ENCODE measurements at regions of chr5 and their contacts with region 1.

Region 1: GRCh38 chr5:153147891-153148623 is 342.4 kb upstream of the GRIA1 start:
- DNase-seq: no peak
- ATAC-seq: peak; percentile 46

Region 2: GRCh38 chr5:152270096-152270495 is 878.0 kb before region 1 on chr5:
- intact Hi-C with region 1: no loop called
- DNase-seq: no peak
- ATAC-seq: peak; percentile 62

Region 3: DNA sequence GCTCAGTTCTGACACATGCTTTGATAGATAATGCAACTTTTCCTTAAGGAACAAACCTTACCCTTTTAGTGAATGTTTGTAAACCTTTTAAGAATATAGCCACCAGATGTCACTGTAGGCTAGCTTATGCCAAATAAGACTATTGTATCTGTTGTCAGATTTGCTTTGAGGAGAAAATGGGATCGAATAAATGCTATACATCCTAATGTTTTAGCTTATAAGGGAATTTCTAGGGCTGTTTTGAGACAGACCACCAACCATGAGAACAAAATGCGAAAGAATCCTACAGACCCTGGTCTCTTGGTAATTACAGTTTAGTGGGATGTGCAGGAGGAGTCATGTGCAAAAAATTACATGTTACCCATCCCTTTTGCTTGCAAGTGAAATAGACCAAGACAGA is 615.3 kb before region 1 on chr5:
- intact Hi-C with region 1: loop called (anchors 2 kb)
- DNase-seq: no peak
- ATAC-seq: no peak

Region 4: DNA sequence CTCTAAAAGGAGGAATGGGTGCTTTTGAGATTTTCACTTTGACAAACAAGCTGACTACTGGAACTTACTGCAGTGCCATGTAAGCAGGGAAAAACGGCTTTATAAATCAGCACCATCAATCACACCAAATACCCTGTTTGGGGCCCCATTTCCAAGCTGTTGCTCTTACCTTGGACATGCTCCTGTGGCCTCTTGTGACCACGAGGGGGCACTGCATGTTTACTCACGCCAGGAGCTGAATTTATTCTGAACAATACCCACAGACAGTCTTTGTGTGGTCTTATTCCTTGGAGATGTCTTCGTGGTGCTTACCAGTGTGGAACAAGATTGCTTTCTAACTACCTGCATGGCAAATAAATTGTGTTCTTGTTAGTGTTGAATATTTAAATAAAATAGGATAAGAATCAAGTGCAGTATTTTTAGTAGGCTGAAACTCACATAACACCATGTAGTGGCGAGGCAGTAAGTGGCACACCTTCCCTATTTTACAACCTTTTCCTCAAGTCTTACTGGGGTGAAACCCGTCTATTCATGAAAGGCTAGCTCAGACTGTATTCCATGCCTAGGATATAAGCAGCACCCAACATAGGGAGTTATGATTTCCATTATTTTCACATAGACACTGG is 587.4 kb before region 1 on chr5:
- intact Hi-C with region 1: loop called (anchors 1 kb)
- DNase-seq: peak; percentile 77
- ATAC-seq: peak; percentile 54

Region 5: DNA sequence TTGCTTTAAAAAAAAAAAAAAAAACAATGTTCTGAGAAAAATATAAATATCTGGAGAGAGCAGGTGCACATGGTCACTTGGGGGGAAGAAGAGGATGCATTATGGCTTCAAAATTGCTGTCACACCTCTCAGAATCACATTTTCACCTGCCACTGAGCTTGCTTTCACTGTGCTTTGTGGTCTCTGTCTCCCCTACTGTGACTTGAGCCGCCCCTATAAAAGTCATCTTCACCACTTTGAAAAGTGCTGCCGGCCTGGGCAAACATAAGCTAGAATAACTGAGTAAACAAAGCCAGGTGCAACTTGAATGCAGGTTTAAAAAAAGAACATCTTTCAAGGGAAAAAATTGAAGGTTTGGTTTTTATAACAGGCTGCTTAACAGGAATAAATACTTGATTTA is 25.7 kb before region 1 on chr5:
- intact Hi-C with region 1: loop called (anchors 2 kb)
- DNase-seq: no peak
- ATAC-seq: no peak